Left ventricle myocardium superior (tissue), 1 donor: ENCODE measurements at regions of chr16 and their contacts with region 1.

Region 1: DNA sequence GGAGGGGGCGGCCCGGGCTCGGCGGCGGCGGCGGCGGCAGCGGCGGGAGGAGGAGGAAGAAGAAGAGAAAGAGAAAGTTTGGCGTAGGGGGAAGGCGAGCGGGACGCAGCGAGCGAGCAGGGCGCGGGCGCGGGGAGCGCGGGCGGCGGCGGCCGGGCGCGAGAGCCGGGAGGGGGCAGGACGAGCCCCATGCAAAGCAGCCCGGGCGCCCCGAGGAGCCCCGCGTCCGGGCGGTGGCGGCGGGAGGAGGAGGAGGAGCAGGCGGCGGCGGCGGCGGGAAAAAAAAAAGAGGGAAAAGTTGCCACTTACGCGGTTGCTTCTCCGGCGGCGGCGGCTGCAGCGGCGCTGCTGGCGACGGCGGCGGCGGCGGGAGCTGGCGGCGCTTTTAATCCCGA is 10.3 kb upstream of the ZFHX3 start:
- DNase-seq: peak; percentile 75
- ATAC-seq: peak; percentile 34

Region 2: GRCh38 chr16:72832621-72833248 is 225.5 kb before region 1 on chr16:
- intact Hi-C with region 1: loop called (anchors 10 kb)
- DNase-seq: peak; percentile 91
- ATAC-seq: peak; percentile 94

Region 3: GRCh38 chr16:72985148-72985941 is 72.9 kb before region 1 on chr16:
- intact Hi-C with region 1: loop called (anchors 2 kb)
- DNase-seq: peak; percentile 77
- ATAC-seq: peak; percentile 74